Activated CD4-positive, alpha-beta T cell treated with anti-CD3 and anti-CD28 coated beads, Interleukin-2, amount 10 ng/mL, durations not matched to agents 24 days and 14 days (primary cell): ENCODE measurements at regions of chr12 and their contacts with region 1.

Region 1: GRCh38 chr12:132429946-132430643 is 59.9 kb upstream of the FBRSL1 start:
- DNase-seq: peak; percentile 92
- H3K4me3 Mint-ChIP-seq: peak overlapping the region; percentile 78
- H3K27ac Mint-ChIP-seq: peak overlapping the region; percentile 24
- H3K4me1 Mint-ChIP-seq: peaks cover 19% of the 10 kb centered on the region
- H3K27me3 Mint-ChIP-seq: peaks cover 2% of the 10 kb centered on the region

Region 2: DNA sequence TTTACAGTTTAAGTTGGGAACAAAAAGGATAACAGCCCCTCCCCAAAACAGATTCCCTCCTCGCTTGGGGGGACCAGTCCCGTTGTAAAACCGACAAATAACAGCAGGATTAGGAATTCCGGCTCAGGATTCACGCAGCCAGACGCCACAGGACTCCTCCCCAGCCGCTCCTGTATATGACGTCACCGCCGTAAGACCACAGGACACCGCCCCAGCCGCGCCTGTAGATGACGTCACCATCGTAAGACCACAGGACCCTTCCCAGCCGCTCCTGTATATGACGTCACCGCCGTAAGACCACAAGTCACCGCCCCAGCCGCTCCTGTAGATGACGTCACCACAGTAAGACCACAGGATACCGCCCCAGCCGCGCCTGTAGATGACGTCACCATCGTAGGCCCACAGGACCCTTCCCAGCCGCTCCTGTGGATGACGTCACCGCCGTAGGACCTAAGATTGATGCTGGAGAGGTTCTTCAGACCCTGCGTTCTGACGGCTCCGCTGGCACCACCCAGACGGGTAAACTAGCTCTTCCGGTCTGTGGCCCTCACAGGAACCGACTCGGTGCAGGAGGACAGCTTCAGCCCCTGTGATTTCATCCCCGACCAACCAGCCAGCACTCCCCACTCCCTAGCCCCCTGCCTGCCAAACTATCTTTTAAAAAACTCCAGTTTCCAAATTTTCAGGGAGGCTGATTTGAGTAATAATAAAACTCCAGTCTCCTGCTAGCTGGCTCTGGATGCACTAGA is 16.0 kb after region 1 on chr12:
- intact Hi-C with region 1: loop called (anchors 2 kb)
- DNase-seq: peak; percentile 89
- H3K4me3 Mint-ChIP-seq: peak overlapping the region; percentile 98
- H3K27ac Mint-ChIP-seq: peak overlapping the region; percentile 99
- H3K4me1 Mint-ChIP-seq: peaks cover 33% of the 10 kb centered on the region
- H3K27me3 Mint-ChIP-seq: no peaks in the 10 kb centered on the region